Psoas muscle (tissue), 8 donors: ENCODE measurements at regions of chr14 and their contacts with region 1.

Region 1: DNA sequence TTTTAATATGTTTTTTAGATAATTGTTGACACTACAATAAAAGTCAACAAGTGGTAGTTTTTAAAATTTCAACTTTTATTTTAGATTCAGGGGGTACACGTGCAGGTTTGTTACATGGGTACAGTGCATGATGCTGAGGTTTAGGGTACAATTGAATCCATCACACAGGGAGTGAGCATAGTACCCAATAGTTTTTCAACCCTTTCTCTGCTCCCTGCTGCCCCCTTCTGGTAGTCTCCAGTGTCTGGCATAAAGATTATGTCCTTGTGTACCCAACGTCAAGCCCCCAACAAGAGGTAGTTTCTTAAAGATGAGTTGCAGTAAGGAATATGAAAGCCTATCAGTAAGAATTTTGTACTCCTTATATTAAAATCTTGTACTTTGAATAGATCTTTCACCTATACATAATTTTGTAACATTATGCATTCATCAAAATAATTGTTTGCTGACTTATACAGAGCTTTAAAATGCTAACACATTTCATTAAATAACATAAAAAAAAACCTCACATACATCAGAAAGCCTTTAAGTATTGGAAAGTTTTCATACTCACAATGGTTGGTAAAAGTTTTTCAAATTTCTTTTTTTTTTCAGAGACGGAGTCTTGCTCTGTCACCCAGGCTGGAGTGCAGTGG is 5.4 kb upstream of the RALGAPA1 start:
- DNase-seq: peak in 1 of 2 donors; percentile 32
- ATAC-seq: peak; percentile 53 to 80 (median 71)
- H3K4me3 ChIP-seq: no peak overlapping the region
- H3K27ac ChIP-seq: no peak overlapping the region
- H3K4me1 ChIP-seq: no peaks in the 10 kb centered on the region
- H3K27me3 ChIP-seq: no peaks in the 10 kb centered on the region
- CTCF ChIP-seq: peak; percentile 62

Region 2: GRCh38 chr14:35687335-35687939 is 127.1 kb before region 1 on chr14:
- intact Hi-C with region 1: loop called in 1 of 2 experiments (anchors 5 kb)
- DNase-seq: no peak
- ATAC-seq: peak in 2 of 4 donors; percentile 73 to 79
- H3K4me3 ChIP-seq: no peak overlapping the region
- H3K27ac ChIP-seq: no peak overlapping the region
- H3K4me1 ChIP-seq: no peaks in the 10 kb centered on the region
- H3K27me3 ChIP-seq: no peaks in the 10 kb centered on the region
- CTCF ChIP-seq: peak; percentile 68

Region 3: GRCh38 chr14:35766700-35767082 is 47.8 kb before region 1 on chr14:
- intact Hi-C with region 1: loop called in 1 of 2 experiments (anchors 10 kb)
- DNase-seq: no peak
- ATAC-seq: no peak
- H3K4me3 ChIP-seq: no peak overlapping the region
- H3K27ac ChIP-seq: no peak overlapping the region
- H3K4me1 ChIP-seq: no peaks in the 10 kb centered on the region
- H3K27me3 ChIP-seq: no peaks in the 10 kb centered on the region
- CTCF ChIP-seq: no peak

Region 4: DNA sequence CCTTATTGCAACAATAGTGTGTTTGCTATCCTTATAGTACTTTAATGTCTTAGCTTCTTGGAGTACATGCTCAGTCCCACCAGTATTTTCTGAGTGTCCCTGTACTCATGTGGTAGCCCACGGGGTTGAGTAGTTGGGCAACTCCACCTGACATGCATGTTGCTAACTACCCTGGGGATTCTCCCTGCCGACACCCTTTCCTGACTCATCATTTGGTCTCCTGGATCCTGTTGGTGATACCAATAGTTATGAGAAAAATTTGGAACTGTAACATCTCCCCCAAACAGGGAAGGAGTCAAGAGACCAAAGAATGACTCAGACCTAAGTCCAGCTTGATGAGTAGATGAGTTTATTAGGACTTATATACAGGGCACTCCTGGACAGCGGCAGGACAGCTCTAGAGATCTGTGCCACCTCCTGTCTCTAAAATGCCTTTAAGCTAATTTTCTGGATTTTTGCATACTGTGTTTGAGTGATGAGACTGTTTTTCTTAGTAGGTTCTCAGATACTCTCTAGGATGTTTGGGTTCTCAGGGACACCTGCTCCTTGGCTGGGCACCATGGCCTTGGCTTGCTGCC is 113.3 kb after region 1 on chr14:
- intact Hi-C with region 1: no loop called
- DNase-seq: no peak
- ATAC-seq: no peak
- H3K4me3 ChIP-seq: no peak overlapping the region
- H3K27ac ChIP-seq: no peak overlapping the region
- H3K4me1 ChIP-seq: no peaks in the 10 kb centered on the region
- H3K27me3 ChIP-seq: no peaks in the 10 kb centered on the region
- CTCF ChIP-seq: no peak